IMR-90 (cell line): ENCODE measurements at regions of chr17 and their contacts with region 1.

Region 1: DNA sequence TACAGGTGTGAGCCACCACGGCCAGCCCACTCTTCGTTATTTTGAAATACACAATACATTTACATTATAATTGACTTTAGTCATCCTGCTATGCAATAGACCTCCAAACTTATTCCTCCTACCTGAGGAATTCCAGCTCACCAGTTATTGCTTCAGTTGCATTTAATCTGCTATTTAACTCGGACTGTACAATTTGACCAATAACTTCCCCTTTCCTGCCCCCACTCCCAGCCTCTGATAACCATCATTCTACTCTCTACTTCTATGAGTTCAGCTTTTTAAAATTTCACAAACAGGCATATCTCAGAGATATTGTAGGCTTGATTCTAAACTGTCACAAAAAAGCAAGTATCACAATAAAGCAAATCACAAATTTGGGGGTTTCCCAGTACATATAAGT is 157.0 kb downstream of the COPRS start:
- DNase-seq: no peak
- ATAC-seq: no peak
- H3K4me3 ChIP-seq: no peak overlapping the region
- H3K27ac ChIP-seq: no peak overlapping the region
- H3K4me1 ChIP-seq: peaks cover 3% of the 10 kb centered on the region
- H3K27me3 ChIP-seq: no peaks in the 10 kb centered on the region
- CTCF ChIP-seq: no peak
- POLR2A ChIP-seq: no peak
- RAD21 ChIP-seq: no peak

Region 2: DNA sequence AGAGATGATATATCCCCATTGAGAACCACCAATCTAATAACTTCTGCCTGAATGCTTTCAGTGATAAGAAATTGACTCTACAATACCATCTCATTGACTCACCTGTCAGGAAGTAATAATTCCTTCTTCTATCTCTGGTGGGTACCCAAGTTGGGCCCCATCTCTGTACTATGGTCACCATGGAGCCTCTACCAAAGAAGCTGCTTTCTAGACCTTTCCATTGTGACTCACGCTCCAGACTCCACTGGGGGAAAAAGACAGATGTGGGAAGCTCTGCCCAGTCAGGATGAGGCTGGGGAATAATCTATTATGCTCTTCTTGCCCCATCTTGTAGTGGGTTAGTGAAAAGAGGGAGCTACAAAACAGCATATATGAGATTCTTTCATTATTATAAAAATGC is 56.6 kb after region 1 on chr17:
- CTCF ChIA-PET with region 1: no interaction called
- POLR2A ChIA-PET with region 1: interaction called, 10 read pairs
- dilution Hi-C with region 1: no loop called
- in situ Hi-C with region 1: no loop called
- intact Hi-C with region 1: no loop called
- DNase-seq: peak; percentile 59
- ATAC-seq: no peak
- H3K4me3 ChIP-seq: no peak overlapping the region
- H3K27ac ChIP-seq: no peak overlapping the region
- H3K4me1 ChIP-seq: peaks cover 5% of the 10 kb centered on the region
- H3K27me3 ChIP-seq: no peaks in the 10 kb centered on the region
- CTCF ChIP-seq: no peak
- POLR2A ChIP-seq: no peak
- RAD21 ChIP-seq: no peak